ENCODE measurements at regions of chr6 and their contacts with region 1.

Region 1: GRCh38 chr6:90078513-90079289 is 184.4 kb downstream of the GJA10 start:
- DNase-seq: no peak
- H3K4me3 ChIP-seq: no peak overlapping the region
- H3K27ac ChIP-seq: peak overlapping the region in 8 of 59 donors; percentile 1 to 44 (median 18)
- H3K27me3 ChIP-seq: no peaks in the 10 kb centered on the region
- CTCF ChIP-seq: no peak

Region 2: GRCh38 chr6:89970609-89971337 is 107.9 kb before region 1 on chr6:
- intact Hi-C with region 1: loop called in 1 of 2 experiments (anchors 5 kb)
- DNase-seq: peak in 7 of 10 donors; percentile 53 to 81 (median 57)
- H3K4me3 ChIP-seq: peak overlapping the region in 3 of 59 donors; percentile 1 to 20 (median 2)
- H3K27ac ChIP-seq: peak overlapping the region in 12 of 59 donors; percentile 10 to 65 (median 19)
- H3K27me3 ChIP-seq: no peaks in the 10 kb centered on the region
- CTCF ChIP-seq: peak; percentile 21 to 83 (median 70)

Region 3: GRCh38 chr6:89984926-89985750 is 93.6 kb before region 1 on chr6:
- intact Hi-C with region 1: loop called in 1 of 2 experiments (anchors 10 kb)
- DNase-seq: peak; percentile 25 to 97 (median 86)
- H3K4me3 ChIP-seq: peak overlapping the region in 45 of 59 donors; percentile 0 to 59 (median 34)
- H3K27ac ChIP-seq: peak overlapping the region in 57 of 59 donors; percentile 7 to 92 (median 77)
- H3K27me3 ChIP-seq: no peaks in the 10 kb centered on the region
- CTCF ChIP-seq: peak in 6 of 56 donors; percentile 10 to 23 (median 18)

Region 4: GRCh38 chr6:90156861-90157260 is 78.2 kb after region 1 on chr6:
- intact Hi-C with region 1: loop called in 1 of 2 experiments (anchors 5 kb)
- DNase-seq: no peak
- H3K4me3 ChIP-seq: no peak overlapping the region
- H3K27ac ChIP-seq: peak overlapping the region in 1 of 59 donors; percentile 16
- H3K27me3 ChIP-seq: no peaks in the 10 kb centered on the region
- CTCF ChIP-seq: no peak

Measured in dorsolateral prefrontal cortex (tissue), 120 donors.